Heart right ventricle (tissue), 16 donors: ENCODE measurements at regions of chr2 and their contacts with region 1.

Region 1: GRCh38 chr2:96951093-96951654 is 35.2 kb downstream of the FAM178B start:
- DNase-seq: peak; percentile 69 to 78
- ATAC-seq: peak; percentile 81 to 93 (median 87)
- H3K4me3 ChIP-seq: peak overlapping the region in 1 of 10 donors; percentile 6
- H3K27ac ChIP-seq: no peak overlapping the region
- H3K4me1 ChIP-seq: peaks cover 13 to 47% (median 39%) of the 10 kb centered on the region in 9 donors
- H3K27me3 ChIP-seq: peaks cover 0 to 9% (median 0%) of the 10 kb centered on the region in 7 donors
- CTCF ChIP-seq: peak; percentile 90 to 98 (median 93)

Region 2: DNA sequence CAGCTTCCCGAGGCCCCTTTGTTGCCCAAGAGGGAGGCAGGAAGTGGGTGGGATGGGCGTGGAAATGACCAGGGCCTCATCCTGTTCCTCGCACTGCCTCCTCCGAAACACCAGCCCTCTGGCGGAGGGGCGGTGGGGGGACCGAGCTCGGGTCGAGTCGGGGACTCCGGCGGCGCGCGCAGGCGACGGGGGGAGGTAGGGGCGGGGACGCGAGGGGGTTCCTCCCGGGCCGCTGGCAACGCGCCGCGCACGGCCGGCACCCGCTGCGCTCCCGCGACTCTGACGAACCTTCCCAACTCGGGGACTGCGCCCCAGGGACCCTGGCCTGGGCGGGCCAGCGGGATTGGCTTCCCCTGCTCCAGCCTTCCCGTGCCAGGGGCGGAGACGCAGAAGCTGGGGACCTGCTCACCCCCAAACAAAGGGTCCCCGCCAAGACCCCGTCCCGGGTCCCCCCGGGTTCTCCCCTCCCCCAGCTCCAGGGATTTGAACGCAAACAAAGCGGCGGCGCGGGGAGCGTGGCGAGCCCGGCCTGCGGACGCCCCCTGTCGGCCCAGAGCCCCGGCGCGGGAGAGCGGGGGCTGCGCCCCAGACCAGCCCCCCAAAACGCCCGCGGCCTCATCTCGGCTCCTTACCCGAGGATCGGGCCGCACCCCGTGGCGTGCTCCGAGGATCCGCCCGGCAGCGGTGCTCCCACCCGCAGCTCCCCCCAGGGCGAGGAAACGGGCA is 82.5 kb before region 1 on chr2:
- intact Hi-C with region 1: loop called in 1 of 10 experiments (anchors 5 kb)
- DNase-seq: peak; percentile 90 to 93
- ATAC-seq: peak; percentile 70 to 80 (median 75)
- H3K4me3 ChIP-seq: peak overlapping the region; percentile 72 to 100 (median 98)
- H3K27ac ChIP-seq: peak overlapping the region; percentile 87 to 100 (median 100)
- H3K4me1 ChIP-seq: peaks cover 16 to 82% (median 72%) of the 10 kb centered on the region in 9 donors
- H3K27me3 ChIP-seq: peaks cover 0 to 56% (median 0%) of the 10 kb centered on the region in 7 donors
- CTCF ChIP-seq: peak; percentile 44 to 77 (median 69)

Region 3: GRCh38 chr2:96907115-96908041 is 43.8 kb before region 1 on chr2:
- intact Hi-C with region 1: loop called in 4 of 10 experiments (anchors 5 kb)
- DNase-seq: peak; percentile 85 to 90
- ATAC-seq: peak; percentile 91 to 97 (median 93)
- H3K4me3 ChIP-seq: peak overlapping the region in 9 of 10 donors; percentile 14 to 37 (median 28)
- H3K27ac ChIP-seq: peak overlapping the region; percentile 81 to 98 (median 94)
- H3K4me1 ChIP-seq: peaks cover 28 to 55% (median 51%) of the 10 kb centered on the region in 9 donors
- H3K27me3 ChIP-seq: no peaks in the 10 kb centered on the region
- CTCF ChIP-seq: peak in 3 of 9 donors; percentile 9 to 31 (median 24)